ENCODE measurements at regions of chr20 and their contacts with region 1.

Region 1: DNA sequence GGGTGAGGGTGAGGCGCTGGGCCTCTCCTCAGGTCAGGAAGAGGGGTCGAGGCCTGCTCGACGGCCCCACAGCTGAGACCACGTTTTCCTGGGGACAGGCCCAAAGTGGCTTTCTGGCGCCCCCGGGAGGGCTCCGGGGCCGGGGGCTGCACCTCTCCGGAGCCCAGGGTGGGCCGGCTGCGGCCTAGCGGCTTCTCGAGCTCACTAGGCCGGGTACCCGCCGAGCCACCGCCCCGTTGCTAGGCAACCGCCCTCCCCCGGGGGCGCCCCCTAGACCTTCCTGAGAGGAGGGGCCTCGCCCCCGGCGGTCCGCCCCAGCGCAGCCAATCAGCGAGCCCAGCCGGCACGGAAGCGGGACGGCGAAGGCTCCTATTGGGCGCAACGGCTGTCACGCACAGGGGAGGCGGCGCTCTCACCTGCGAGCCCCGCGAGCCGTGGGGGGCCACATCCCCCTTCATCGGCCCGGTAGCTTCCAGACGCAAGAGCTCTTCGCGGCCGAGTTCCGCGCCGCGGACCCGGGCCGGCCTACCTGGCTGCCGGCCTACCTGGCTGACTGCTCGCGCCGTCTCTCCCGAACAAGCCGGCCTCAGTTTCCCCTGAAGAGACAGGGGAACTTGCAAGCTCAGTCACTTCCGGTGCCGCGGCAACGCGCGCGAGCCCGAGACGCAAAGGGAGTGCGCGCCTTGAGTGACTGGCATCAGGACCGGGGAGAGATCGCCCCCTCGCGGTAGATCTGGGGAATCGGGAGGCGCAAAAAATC is 831 bp upstream of the BCL2L1 start:
- DNase-seq: peak; percentile 99
- H3K4me3 Mint-ChIP-seq: peak overlapping the region; percentile 95
- H3K27ac Mint-ChIP-seq: peak overlapping the region; percentile 99
- H3K4me1 Mint-ChIP-seq: peaks cover 5% of the 10 kb centered on the region
- H3K27me3 Mint-ChIP-seq: no peaks in the 10 kb centered on the region

Region 2: GRCh38 chr20:31560094-31560899 is 163.2 kb before region 1 on chr20:
- CTCF ChIA-PET with region 1: interaction called, 8 read pairs
- intact Hi-C with region 1: loop called (anchors 2 kb)
- DNase-seq: peak; percentile 92
- H3K4me3 Mint-ChIP-seq: no peak overlapping the region
- H3K27ac Mint-ChIP-seq: peak overlapping the region; percentile 61
- H3K4me1 Mint-ChIP-seq: peaks cover 13% of the 10 kb centered on the region
- H3K27me3 Mint-ChIP-seq: no peaks in the 10 kb centered on the region

Region 3: GRCh38 chr20:31630187-31630790 is 93.2 kb before region 1 on chr20:
- CTCF ChIA-PET with region 1: interaction called, 81 read pairs
- intact Hi-C with region 1: loop called (anchors 1 kb)
- DNase-seq: no peak
- H3K4me3 Mint-ChIP-seq: no peak overlapping the region
- H3K27ac Mint-ChIP-seq: no peak overlapping the region
- H3K4me1 Mint-ChIP-seq: no peaks in the 10 kb centered on the region
- H3K27me3 Mint-ChIP-seq: no peaks in the 10 kb centered on the region

Region 4: DNA sequence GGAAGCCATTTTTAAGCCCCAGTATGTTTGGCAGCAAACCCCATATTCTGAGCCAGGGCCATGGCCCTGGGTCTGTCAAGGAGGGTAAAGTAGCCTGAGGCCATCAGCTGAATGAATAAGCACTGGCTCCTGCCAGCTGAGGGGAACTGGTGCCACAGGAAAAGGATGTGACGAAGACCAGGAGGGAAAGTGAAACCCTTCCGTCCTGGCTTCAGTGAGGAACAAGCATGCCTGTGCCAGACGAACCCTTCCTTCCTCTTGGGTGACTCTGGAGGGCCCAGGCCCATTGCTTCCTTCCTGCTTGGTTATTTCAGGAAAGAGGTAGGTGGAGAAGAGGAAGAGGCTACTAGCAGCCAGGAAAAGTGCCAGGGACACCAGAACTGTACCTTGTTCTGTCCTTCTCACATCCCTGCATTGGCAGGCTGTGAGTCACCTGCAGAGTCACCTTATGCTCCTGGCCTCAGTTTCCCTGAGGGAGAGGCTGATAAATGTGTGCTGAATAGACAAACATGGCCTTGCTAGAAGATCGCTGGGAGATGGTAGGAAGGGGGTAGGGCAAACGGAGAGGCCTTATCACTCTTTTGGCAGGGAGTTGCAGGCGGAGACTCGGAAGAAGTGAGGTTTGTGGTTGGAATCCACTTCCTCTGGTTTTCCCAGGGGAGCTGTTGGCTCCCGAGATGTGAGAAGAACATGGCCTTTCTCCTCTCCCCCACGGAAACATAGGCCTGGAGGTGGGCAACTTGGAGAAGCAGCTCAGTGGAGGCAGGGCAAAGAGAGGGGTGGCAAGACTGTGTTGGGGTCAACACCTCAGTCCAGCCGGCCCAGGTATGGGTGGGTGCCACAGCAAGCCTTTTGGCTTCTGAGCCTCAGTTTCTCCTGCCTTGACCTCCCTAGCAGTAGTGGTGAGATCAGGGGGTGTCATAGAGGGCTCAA is 48.3 kb before region 1 on chr20:
- CTCF ChIA-PET with region 1: interaction called, 103 read pairs
- intact Hi-C with region 1: loop called (anchors 1 kb)
- DNase-seq: peak; percentile 86
- H3K4me3 Mint-ChIP-seq: peak overlapping the region; percentile 84
- H3K27ac Mint-ChIP-seq: peak overlapping the region; percentile 97
- H3K4me1 Mint-ChIP-seq: peaks cover 79% of the 10 kb centered on the region
- H3K27me3 Mint-ChIP-seq: no peaks in the 10 kb centered on the region

Region 5: DNA sequence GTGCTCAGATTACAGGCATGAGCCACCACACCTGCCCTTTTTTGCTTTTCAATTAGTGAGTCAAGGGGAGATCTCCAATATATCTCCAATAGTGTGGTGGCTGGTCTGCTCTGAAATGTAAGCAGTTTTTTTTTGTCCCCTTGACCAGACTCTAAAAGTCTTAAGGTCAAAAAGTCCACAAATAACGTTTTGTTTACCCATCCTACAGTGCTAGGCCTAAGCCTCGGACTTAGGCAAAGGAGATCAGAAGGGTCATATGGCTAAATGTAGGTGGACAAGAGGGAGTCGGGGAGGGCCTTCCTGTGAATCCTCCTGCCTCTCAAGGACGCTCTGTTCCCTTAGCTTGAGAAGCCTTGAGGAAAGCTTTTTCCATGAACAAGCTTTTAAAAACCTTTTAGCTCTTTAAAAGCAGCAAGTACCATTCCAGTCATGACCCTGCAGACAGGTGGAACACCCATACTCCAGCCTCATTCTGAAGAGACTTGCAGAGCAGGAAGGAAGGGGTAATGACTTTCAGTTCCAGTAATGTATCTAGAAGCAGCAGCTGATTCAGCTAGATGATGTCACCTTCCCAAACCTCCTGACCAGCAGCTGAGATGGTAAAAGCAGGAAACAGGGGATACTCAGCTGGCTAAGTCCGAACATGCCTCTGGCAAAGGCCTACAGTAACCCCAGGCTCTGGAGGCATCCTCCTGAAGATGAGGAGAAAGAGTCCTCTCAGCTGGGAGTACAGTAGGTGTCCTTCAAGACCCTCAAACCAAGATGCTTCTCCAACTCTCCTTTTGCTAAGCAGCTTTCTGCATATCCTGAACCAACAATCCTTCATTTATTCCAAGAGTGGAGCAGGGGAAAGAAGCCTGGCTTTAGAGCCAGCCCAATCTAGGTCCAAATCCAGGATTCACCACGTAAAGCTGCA is 24.4 kb before region 1 on chr20:
- CTCF ChIA-PET with region 1: interaction called, 9 read pairs
- intact Hi-C with region 1: loop called (anchors 1 kb)
- DNase-seq: peak; percentile 73
- H3K4me3 Mint-ChIP-seq: no peak overlapping the region
- H3K27ac Mint-ChIP-seq: peak overlapping the region; percentile 91
- H3K4me1 Mint-ChIP-seq: peaks cover 76% of the 10 kb centered on the region
- H3K27me3 Mint-ChIP-seq: no peaks in the 10 kb centered on the region

Region 6: GRCh38 chr20:31849455-31849925 is 126.0 kb after region 1 on chr20:
- CTCF ChIA-PET with region 1: no interaction called
- intact Hi-C with region 1: no loop called
- DNase-seq: no peak
- H3K4me3 Mint-ChIP-seq: no peak overlapping the region
- H3K27ac Mint-ChIP-seq: no peak overlapping the region
- H3K4me1 Mint-ChIP-seq: no peaks in the 10 kb centered on the region
- H3K27me3 Mint-ChIP-seq: peaks cover 21% of the 10 kb centered on the region

Measured in activated naive CD4-positive, alpha-beta T cell treated with anti-CD3 and anti-CD28 coated beads for 36 hours (primary cell).